CD8-positive, alpha-beta T cell (primary cell): ENCODE measurements at regions of chr3 and their contacts with region 1.

Region 1: GRCh38 chr3:141913150-141913811 is 36.8 kb downstream of the ATP1B3 start:
- DNase-seq: peak in 8 of 9 experiments; percentile 21 to 78 (median 47)
- ATAC-seq: peak; percentile 80
- H3K4me3 ChIP-seq: no peak overlapping the region
- H3K4me3 Mint-ChIP-seq: no peak overlapping the region
- H3K27ac ChIP-seq: peak overlapping the region in 1 of 2 experiments; percentile 23
- H3K27ac Mint-ChIP-seq: no peak overlapping the region
- H3K4me1 ChIP-seq: no peaks in the 10 kb centered on the region
- H3K4me1 Mint-ChIP-seq: no peaks in the 10 kb centered on the region
- H3K27me3 ChIP-seq: no peaks in the 10 kb centered on the region
- H3K27me3 Mint-ChIP-seq: no peaks in the 10 kb centered on the region
- CTCF ChIP-seq: peak; percentile 77

Region 2: DNA sequence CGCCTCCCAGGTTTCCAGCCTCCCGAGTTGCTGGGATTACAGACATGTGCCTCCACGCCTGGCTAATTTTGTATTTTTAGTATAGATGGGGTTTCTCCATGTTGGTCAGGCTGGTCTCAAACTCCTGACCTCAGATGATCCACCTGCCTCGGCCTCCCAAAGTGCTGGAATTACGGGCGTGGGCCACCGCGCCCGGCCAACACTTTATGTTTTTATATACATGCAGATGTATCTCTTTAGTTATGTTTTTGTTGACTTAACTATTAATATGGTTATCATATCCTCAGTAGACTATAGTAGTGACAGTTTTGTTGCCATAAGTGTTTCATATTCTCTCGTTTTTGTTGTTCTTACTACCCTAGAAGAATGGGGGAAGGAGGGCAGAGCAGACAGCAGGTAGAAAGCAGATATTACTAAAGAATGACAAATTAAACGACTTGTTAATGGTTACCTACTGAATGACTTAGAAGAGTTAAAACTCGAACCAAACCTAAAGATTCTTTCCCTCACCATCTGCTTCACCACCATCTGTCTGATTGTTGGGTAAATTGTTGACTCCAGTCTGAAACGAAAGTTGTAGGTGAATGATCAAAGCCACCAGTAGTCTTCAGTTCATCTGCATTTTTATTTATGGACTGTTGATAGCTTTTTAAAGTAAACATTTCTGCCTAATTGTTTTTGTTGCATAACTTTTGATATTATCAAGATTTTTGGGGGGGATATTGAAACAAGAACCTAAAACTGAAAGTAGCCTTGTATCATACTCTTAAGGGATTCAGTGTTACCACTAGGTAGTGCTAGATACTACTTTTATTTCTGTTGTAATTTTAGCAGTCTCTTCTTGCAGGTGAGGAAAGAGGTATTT is 337.2 kb before region 1 on chr3:
- CTCF ChIA-PET with region 1: interaction called, 30 read pairs
- POLR2A ChIA-PET with region 1: no interaction called
- intact Hi-C with region 1: loop called (anchors 1 to 2 kb)
- DNase-seq: peak in 2 of 9 experiments; percentile 19 to 54
- ATAC-seq: peak; percentile 75
- H3K4me3 ChIP-seq: no peak overlapping the region
- H3K4me3 Mint-ChIP-seq: peak overlapping the region; percentile 64
- H3K27ac ChIP-seq: peak overlapping the region in 1 of 2 experiments; percentile 52
- H3K27ac Mint-ChIP-seq: peak overlapping the region; percentile 86
- H3K4me1 ChIP-seq: peaks cover 6% of the 10 kb centered on the region
- H3K4me1 Mint-ChIP-seq: peaks cover 11% of the 10 kb centered on the region
- H3K27me3 ChIP-seq: no peaks in the 10 kb centered on the region
- H3K27me3 Mint-ChIP-seq: no peaks in the 10 kb centered on the region
- CTCF ChIP-seq: peak; percentile 62

Region 3: GRCh38 chr3:141887051-141887450 is 26.2 kb before region 1 on chr3:
- CTCF ChIA-PET with region 1: interaction called, 17 read pairs
- POLR2A ChIA-PET with region 1: no interaction called
- intact Hi-C with region 1: no loop called
- DNase-seq: no peak
- ATAC-seq: no peak
- H3K4me3 ChIP-seq: no peak overlapping the region
- H3K4me3 Mint-ChIP-seq: no peak overlapping the region
- H3K27ac ChIP-seq: no peak overlapping the region
- H3K27ac Mint-ChIP-seq: no peak overlapping the region
- H3K4me1 ChIP-seq: no peaks in the 10 kb centered on the region
- H3K4me1 Mint-ChIP-seq: peaks cover 32% of the 10 kb centered on the region
- H3K27me3 ChIP-seq: no peaks in the 10 kb centered on the region
- H3K27me3 Mint-ChIP-seq: no peaks in the 10 kb centered on the region
- CTCF ChIP-seq: no peak

Region 4: DNA sequence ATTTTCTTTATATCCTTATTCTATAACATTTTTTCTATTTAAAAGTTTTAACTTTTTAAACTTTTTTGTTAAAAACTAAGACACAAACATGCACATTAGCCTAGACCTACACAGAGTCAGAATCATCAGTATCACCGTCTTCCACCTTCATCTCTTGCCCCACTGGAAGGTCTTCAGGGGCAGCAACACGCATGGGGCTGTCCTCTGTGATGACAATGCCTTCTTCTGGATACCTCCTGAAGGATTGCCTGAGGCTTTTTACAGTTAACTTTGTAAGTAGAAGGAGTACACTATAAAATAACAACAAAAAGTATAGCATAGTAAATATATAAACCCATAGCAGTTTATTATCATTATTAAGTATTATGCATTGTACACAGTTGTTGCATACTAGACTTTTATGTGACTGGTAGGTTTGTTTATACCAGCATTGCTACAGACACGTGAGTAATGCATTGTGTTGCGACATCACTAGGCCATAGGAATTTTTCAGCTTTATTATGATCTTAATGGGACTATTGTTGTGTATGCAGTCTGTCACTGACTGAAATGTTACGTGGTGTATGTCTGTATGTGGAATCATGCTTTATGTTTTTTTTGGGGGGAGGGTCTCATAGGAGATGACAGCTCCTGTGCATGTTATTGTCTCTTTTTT is 18.6 kb before region 1 on chr3:
- CTCF ChIA-PET with region 1: interaction called, 17 read pairs
- POLR2A ChIA-PET with region 1: no interaction called
- intact Hi-C with region 1: no loop called
- DNase-seq: no peak
- ATAC-seq: no peak
- H3K4me3 ChIP-seq: no peak overlapping the region
- H3K4me3 Mint-ChIP-seq: no peak overlapping the region
- H3K27ac ChIP-seq: no peak overlapping the region
- H3K27ac Mint-ChIP-seq: no peak overlapping the region
- H3K4me1 ChIP-seq: no peaks in the 10 kb centered on the region
- H3K4me1 Mint-ChIP-seq: peaks cover 17% of the 10 kb centered on the region
- H3K27me3 ChIP-seq: no peaks in the 10 kb centered on the region
- H3K27me3 Mint-ChIP-seq: no peaks in the 10 kb centered on the region
- CTCF ChIP-seq: no peak

Region 5: DNA sequence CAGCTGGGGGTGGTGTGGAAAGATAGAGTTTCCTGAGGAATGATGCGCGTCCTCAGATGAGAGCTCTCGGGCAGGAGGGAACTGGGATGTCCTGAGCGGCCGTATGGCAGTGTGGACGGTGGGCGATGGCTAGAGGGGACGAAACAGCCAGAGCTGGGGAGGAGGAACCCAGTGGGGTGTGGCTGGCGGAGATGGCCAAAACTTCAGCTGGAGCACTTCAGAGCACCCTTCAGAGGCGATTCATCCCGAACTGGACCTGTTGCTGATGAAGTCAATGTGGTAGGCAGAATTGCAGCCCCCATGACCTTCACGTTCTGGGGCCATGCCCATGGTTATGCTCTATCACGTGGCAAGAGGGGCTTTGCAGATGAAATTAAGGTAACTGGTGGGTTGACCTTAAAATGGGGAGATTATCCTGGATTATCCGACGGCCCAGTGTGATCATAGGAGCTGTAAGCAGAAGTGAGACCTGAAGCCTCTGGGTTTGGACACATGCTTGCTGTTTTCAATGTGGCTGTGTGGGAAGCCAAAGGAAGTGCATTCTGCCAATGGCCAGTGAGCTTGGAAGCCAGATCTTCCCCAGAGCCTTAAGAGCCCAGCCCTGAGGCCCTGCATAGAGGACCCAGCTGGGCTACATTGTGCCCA is 15.5 kb after region 1 on chr3:
- CTCF ChIA-PET with region 1: interaction called, 19 read pairs
- POLR2A ChIA-PET with region 1: no interaction called
- intact Hi-C with region 1: no loop called
- DNase-seq: peak in 1 of 9 experiments; percentile 34
- ATAC-seq: no peak
- H3K4me3 ChIP-seq: no peak overlapping the region
- H3K4me3 Mint-ChIP-seq: no peak overlapping the region
- H3K27ac ChIP-seq: no peak overlapping the region
- H3K27ac Mint-ChIP-seq: no peak overlapping the region
- H3K4me1 ChIP-seq: no peaks in the 10 kb centered on the region
- H3K4me1 Mint-ChIP-seq: no peaks in the 10 kb centered on the region
- H3K27me3 ChIP-seq: no peaks in the 10 kb centered on the region
- H3K27me3 Mint-ChIP-seq: no peaks in the 10 kb centered on the region
- CTCF ChIP-seq: no peak